Activated CD4-positive, alpha-beta T cell treated with anti-CD3 and anti-CD28 coated beads for 36 hours (primary cell): ENCODE measurements at regions of chr3 and their contacts with region 1.

Region 1: DNA sequence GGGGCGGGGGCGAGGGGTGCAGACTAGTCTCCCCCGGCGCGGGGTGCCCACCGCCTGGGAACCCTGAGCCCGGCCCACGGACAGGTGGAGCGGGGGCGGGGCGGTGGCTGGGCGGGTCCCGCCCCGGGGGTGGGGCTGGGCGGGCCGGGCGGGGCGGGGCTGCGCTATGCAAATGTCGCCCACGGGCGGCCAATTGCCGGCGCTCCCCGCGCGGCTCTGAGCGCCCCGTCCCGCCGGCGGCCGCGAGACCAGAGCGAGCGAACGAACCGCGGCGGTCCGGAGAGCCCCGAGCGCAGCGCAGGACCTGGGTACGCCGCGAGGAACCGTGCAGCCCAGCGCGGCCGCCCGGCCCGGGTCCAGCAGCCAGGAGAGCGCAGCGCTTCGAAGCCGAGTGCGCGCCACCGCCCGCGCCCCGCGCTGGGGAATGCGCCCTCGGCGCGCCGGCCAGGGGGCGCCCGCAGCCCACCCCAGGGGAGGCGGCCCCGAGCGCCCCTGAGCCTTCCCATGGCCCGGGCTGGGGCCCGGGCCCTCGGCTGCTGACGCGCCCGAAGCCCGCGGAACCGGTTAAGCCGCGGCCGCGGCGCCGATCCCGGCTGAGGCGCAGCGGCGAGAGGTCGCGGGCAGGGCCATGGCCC is at the start of gene SEMA3F:
- DNase-seq: peak; percentile 79
- ATAC-seq: peak; percentile 89
- H3K4me3 Mint-ChIP-seq: peak within 1 kb of the TSS; percentile 60
- H3K27ac Mint-ChIP-seq: no peak within 1 kb of the TSS
- H3K4me1 Mint-ChIP-seq: peaks cover 8% of the 10 kb centered on the region
- H3K27me3 Mint-ChIP-seq: peaks cover 29% of the 10 kb centered on the region
- total RNA-seq, gene SEMA3F: 0.25 to 0.46 TPM

Region 2: DNA sequence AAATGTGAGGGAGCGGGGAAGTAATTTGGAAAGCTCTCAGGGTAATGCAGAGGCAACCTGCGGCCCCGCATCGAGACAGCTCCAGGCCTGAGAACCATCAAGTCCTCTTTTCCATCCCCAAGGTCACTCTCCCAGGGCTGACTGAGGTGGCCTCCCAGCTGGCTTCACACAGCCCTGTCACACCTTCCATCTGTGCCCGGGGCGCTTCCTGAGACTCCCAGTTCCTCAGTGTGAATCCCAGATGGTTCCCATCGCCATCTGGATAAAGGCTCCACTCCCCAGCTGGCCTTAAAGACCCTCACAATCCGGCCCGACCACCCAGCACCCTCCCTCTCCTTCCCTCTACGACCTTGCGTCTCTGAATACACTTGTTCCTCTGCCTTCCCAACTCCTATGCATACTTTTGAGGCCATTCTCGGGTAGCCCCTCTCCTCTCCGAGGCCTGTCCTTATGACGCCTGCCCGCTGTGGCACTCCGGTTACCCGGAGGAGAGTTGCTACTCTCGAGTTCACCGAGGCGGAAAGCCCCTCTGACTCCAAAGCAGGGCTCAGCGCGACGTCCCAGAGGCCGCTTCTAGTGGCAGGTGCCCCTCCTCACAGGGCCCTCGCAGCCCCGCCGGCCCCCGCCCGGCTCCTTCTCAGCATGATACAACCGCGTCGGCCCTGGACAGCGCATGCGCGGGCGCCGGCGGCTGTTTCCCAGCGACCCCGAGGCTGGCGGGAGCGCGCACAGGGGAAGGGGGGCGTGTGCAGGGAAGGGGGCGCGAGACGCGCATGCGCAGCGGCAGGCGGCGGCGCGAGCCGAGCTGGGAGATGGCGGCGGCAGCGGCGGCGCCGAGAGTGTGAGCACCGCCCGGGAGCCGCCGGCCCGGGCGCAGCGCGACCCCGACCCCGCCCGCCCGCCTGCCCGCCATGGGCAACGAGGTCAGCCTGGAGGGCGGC is 601.0 kb before region 1 on chr3 and contains the start of gene BSN:
- CTCF ChIA-PET with region 1: no interaction called
- POLR2A ChIA-PET with region 1: no interaction called
- intact Hi-C with region 1: loop called in 1 of 2 experiments (anchors 10 kb)
- DNase-seq: peak; percentile 95
- ATAC-seq: peak; percentile 92
- H3K4me3 Mint-ChIP-seq: peak within 1 kb of the TSS; percentile 72
- H3K27ac Mint-ChIP-seq: peak within 1 kb of the TSS; percentile 24
- H3K4me1 Mint-ChIP-seq: peaks cover 11% of the 10 kb centered on the region
- H3K27me3 Mint-ChIP-seq: peaks cover 34% of the 10 kb centered on the region
- total RNA-seq, gene BSN: 0.09 to 0.11 TPM

Region 3: DNA sequence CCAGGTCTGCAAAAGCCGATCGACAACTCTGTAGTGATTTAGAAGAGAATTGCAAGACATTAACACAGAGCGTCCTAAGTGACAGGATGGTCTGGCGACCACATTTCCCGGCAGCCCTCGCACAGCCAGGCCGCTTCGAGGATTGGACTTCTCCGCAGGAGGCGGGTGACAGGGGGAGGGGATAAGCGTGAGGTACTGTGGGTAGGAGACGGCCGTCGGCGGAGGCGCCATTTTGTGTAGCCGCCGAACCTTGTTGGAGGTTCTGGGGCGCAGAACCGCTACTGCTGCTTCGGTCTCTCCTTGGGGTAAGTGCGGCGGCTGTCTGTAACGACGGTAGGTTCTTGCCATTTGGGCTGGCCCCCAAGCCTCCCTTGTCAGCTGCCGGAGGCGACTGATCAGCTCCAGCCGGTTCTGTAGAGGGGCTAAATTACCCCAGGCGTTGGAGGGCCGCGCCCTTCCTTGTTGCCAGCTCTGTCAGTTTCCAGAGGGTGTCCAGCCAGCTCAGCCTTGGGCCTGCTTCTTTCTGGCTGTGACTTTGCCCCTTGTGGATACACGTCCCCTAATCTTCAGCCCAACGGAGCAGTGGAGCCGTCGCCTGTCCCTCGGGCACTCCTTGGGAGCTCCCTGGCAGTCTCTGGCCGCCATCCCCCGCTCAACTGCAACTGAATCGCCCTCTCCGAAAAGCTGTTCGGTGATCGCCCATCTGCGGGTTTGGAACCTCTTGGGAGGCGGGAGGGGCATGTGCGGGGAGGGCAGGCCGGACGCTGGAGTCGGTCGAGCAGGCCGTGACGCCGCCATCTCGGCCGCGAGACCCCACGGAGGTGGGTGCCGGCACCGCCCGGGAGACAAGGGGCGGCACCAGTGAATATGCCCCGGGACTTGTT is 66.0 kb before region 1 on chr3 and contains the start of gene RBM5:
- CTCF ChIA-PET with region 1: no interaction called
- POLR2A ChIA-PET with region 1: no interaction called
- intact Hi-C with region 1: loop called in 1 of 2 experiments (anchors 2 kb)
- DNase-seq: peak; percentile 97
- ATAC-seq: peak; percentile 100
- H3K4me3 Mint-ChIP-seq: peak within 1 kb of the TSS; percentile 99
- H3K27ac Mint-ChIP-seq: peak within 1 kb of the TSS; percentile 97
- H3K4me1 Mint-ChIP-seq: peaks cover 28% of the 10 kb centered on the region
- H3K27me3 Mint-ChIP-seq: no peaks in the 10 kb centered on the region
- total RNA-seq, gene RBM5: 118 to 131 TPM

Region 4: GRCh38 chr3:50121416-50122032 is 33.4 kb before region 1 on chr3:
- CTCF ChIA-PET with region 1: interaction called, 3 read pairs
- POLR2A ChIA-PET with region 1: interaction called, 3 read pairs
- intact Hi-C with region 1: loop called in 1 of 2 experiments (anchors 1 kb)
- DNase-seq: peak; percentile 87
- ATAC-seq: peak; percentile 93
- H3K4me3 Mint-ChIP-seq: no peak overlapping the region
- H3K27ac Mint-ChIP-seq: no peak overlapping the region
- H3K4me1 Mint-ChIP-seq: no peaks in the 10 kb centered on the region
- H3K27me3 Mint-ChIP-seq: no peaks in the 10 kb centered on the region

Region 5: DNA sequence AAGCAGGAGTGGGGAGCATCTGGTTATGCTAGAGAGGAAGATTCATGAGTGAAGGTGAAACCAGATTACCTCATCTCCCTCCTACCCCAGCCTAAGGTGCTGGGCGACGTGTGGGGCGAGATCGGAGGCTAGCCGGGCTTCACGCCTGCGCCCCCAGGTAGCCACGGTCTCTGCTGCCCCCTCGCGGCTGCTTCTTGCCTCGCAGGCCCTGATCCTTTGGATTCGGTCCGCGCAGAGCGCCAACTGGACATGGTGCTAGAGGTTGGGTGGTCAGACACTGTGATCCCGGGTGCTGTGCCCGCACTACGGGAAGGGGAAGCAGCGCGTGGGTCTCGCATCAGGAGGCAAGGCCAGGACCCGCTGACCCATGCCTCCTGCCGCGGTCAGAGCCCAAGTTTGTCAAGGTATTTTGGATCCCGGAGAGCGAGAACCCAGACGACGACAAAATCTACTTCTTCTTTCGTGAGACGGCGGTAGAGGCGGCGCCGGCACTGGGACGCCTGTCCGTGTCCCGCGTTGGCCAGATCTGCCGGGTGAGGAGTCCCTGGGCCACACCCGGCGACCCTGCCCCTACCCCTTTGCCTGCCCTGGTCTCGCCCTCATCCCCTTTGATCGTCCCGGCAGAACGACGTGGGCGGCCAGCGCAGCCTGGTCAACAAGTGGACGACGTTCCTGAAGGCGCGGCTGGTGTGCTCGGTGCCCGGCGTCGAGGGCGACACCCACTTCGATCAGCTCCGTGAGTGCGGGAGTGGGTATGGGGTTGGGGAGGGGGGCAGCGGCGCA is 118.1 kb after region 1 on chr3:
- CTCF ChIA-PET with region 1: no interaction called
- POLR2A ChIA-PET with region 1: no interaction called
- intact Hi-C with region 1: loop called in 1 of 2 experiments (anchors 1 kb)
- DNase-seq: peak; percentile 96
- ATAC-seq: peak; percentile 87
- H3K4me3 Mint-ChIP-seq: peak overlapping the region; percentile 68
- H3K27ac Mint-ChIP-seq: peak overlapping the region; percentile 58
- H3K4me1 Mint-ChIP-seq: peaks cover 25% of the 10 kb centered on the region
- H3K27me3 Mint-ChIP-seq: peaks cover 37% of the 10 kb centered on the region

Region 6: DNA sequence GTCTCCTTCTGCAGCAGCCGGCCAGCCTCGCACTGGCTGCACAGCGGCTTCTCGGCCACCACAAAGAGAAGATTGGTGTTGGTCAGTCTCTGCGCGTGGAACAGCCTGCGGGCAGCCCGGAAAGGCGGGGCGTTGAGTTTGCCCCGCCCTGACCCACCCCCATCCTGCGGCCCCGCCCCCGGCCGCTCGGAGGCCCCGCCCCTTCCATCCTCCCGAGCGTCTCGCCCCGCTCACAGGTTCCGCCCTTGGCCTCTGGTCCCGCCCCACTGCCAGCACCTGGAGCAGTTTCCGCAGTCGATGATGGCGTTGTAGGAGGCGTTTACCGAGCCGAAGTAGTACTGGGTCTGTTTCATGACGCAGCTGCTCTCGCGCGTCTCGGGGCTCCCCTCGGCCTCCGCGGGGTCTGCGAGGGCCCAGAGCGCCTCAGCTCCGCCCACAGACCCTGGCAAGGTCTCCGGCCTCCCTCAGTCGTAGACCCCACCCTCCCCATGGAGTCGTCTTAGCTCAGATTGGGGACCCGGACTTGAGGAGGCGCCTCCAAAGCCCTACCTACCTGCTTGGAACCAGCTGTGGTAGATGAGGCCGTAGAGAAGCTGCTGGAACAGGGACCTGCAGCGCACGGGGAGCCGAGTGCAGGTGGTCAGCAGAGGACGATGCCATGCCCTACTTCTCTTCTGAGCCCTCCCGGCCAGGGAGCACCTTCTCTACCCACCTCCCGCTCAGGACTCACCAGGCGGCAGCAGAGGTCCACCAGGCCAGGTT is 210.3 kb after region 1 on chr3:
- CTCF ChIA-PET with region 1: no interaction called
- POLR2A ChIA-PET with region 1: no interaction called
- intact Hi-C with region 1: loop called in 1 of 2 experiments (anchors 1 kb)
- DNase-seq: peak; percentile 98
- ATAC-seq: peak; percentile 99
- H3K4me3 Mint-ChIP-seq: peak overlapping the region; percentile 72
- H3K27ac Mint-ChIP-seq: peak overlapping the region; percentile 74
- H3K4me1 Mint-ChIP-seq: peaks cover 13% of the 10 kb centered on the region
- H3K27me3 Mint-ChIP-seq: no peaks in the 10 kb centered on the region